ENCODE measurements at regions of chr6 and their contacts with region 1.

Region 1: GRCh38 chr6:24428628-24429027 is 25.9 kb downstream of the MRS2 start:
- DNase-seq: no peak
- ATAC-seq: no peak
- H3K4me3 ChIP-seq: no peak overlapping the region
- H3K27ac ChIP-seq: no peak overlapping the region
- H3K4me1 ChIP-seq: no peaks in the 10 kb centered on the region
- H3K27me3 ChIP-seq: no peaks in the 10 kb centered on the region

Region 2: DNA sequence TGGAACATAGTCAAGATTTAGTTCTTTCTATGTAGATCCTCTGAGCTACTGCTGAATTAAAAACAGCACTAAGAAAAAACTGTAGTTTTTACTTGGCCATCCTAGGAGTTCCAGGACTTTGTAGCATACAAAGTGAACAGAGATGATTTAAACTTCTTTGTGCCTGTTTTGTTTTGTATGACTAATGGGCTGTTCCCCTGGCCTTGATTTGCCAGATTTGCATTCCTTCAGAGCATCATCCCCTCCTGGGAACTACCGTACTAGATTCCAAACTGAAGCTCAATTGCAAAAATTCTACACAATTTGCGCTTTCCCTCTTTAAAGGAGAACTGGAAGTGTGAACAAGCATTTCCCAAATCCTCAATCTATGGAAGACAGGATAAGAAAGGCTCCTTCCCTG is 261.3 kb after region 1 on chr6:
- intact Hi-C with region 1: loop called in 1 of 4 experiments (anchors 10 kb)
- DNase-seq: no peak
- ATAC-seq: no peak
- H3K4me3 ChIP-seq: no peak overlapping the region
- H3K27ac ChIP-seq: no peak overlapping the region
- H3K4me1 ChIP-seq: no peaks in the 10 kb centered on the region
- H3K27me3 ChIP-seq: no peaks in the 10 kb centered on the region

Region 3: DNA sequence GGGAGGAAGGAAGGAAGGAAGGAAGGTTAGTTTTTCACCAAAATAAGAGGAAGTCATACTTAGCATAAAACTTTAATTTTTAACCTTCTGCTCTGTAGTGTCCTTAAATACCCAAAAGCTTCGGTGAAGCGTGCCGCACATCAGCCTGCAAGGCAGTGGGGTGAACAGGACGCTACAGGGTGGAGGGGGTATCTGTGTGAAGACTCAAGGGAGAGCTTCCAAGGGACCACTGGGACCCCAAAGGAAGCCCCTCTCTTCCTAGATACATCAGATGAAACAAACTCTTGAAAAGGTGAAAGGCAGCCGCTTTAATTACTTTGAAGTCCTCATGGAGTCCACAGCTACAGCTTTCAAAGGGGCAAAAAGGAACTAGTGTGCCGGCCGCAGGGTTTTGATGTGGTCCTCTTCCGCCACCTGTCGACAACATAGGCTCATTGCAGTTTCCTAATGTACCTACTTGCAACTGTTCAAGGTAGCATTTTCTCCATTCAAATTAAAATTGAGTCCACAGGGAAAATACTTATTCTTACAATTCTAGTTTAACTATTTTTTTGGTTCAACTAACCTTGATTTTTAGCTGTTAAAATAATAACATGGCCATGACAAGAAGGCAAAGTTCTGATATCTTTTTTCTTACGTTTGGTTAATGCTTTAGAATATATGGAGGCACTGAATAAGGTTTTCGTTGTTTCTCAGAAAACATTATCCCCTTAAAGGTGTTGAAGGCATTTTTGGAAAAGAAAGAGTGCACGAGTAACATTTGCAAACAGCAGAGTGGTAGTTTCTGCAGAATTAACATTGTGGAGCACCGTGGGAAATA is 642.1 kb after region 1 on chr6:
- intact Hi-C with region 1: no loop called
- DNase-seq: peak; percentile 61 to 84 (median 73)
- ATAC-seq: peak; percentile 68 to 87
- H3K4me3 ChIP-seq: no peak overlapping the region
- H3K27ac ChIP-seq: no peak overlapping the region
- H3K4me1 ChIP-seq: peaks cover 2% of the 10 kb centered on the region
- H3K27me3 ChIP-seq: no peaks in the 10 kb centered on the region

Measured in right cardiac atrium (tissue), 5 donors.